Activated naive CD4-positive, alpha-beta T cell treated with anti-CD3 and anti-CD28 coated beads for 36 hours (primary cell): ENCODE measurements at regions of chr3 and their contacts with region 1.

Region 1: DNA sequence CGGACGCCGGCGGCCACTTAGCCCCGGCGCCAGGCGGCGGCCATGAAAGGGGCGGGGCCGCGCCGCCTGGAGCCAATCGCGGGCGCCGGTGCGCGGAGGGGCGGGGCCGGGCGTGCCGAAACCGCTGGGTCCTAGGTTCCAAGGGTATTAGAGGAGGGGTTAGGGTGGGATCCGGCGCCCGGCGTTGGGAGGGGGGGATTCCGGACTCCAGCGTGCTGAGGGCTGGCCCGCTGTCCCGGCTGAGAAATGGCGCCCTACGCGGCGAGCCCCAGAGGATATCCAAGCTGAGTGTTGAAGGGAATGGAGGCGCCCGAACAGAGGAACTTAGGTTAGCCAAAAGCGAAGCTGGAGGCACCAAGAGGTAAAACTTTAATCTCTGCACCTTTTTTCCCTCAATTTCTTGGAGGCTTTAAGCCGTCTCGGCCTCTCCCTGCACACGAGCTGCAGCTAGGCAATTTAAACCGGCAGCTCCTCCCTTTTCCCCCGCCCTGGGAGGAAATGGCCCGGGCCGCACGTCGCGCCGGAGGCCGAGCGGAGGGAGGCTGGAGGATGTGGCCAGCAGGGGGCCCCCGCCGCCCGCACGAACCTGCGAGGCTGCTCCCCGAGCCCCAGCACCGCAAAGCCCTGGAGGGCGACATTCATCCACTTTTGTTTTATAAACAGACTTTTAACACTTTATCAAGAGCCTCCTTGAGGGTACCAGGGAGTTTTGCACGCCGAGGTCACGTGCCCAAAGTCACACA is at the start of gene XXYLT1:
- DNase-seq: peak; percentile 95
- H3K4me3 Mint-ChIP-seq: peak within 1 kb of the TSS; percentile 83
- H3K27ac Mint-ChIP-seq: no peak within 1 kb of the TSS
- H3K4me1 Mint-ChIP-seq: peaks cover 20% of the 10 kb centered on the region
- H3K27me3 Mint-ChIP-seq: no peaks in the 10 kb centered on the region
- total RNA-seq, gene XXYLT1: 1.8 to 2.5 TPM

Region 2: GRCh38 chr3:195197765-195198425 is 73.4 kb before region 1 on chr3:
- CTCF ChIA-PET with region 1: no interaction called
- intact Hi-C with region 1: no loop called
- DNase-seq: no peak
- H3K4me3 Mint-ChIP-seq: no peak overlapping the region
- H3K27ac Mint-ChIP-seq: no peak overlapping the region
- H3K4me1 Mint-ChIP-seq: peaks cover 15% of the 10 kb centered on the region
- H3K27me3 Mint-ChIP-seq: no peaks in the 10 kb centered on the region

Region 3: DNA sequence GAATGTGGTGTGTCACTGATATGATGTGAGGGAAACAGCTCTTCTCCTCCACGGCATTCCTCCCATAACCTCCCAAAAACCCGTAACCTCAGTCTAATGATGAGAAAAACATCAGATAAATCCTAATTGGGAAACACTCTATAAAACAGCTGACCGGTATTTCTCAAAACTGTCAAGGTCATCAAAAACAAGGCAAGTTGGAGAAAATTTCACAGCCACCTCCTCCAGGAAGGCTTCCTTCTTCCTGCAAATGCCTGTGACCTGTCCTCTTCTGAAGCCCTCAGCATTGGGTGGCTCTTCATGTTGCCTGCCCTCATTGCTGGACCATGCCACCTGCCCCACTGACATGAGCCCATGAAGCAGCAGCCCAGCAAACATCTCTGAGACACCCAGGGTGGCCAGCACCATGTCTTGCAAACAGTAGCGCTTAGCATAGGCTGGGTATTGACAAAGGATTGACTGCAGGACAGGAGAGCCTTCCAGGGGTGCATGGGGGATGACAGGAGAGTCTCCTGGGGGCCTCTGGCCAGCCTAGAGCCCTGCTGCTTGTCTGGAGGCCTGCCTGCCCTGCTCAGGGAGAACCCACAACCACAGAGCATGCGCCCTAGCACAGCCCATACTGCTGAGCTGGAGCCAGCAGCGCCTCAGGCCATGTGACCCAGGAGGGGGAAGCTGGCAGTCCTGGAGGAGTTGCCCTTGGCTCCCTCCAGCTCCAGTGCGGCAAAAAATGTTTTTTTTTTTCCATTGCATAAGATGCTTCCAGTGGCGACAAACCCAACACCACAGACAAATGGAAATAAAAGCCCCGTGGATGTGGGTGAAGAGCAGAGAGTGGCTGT is 50.1 kb before region 1 on chr3:
- CTCF ChIA-PET with region 1: no interaction called
- intact Hi-C with region 1: no loop called
- DNase-seq: no peak
- H3K4me3 Mint-ChIP-seq: no peak overlapping the region
- H3K27ac Mint-ChIP-seq: no peak overlapping the region
- H3K4me1 Mint-ChIP-seq: no peaks in the 10 kb centered on the region
- H3K27me3 Mint-ChIP-seq: no peaks in the 10 kb centered on the region

Region 4: DNA sequence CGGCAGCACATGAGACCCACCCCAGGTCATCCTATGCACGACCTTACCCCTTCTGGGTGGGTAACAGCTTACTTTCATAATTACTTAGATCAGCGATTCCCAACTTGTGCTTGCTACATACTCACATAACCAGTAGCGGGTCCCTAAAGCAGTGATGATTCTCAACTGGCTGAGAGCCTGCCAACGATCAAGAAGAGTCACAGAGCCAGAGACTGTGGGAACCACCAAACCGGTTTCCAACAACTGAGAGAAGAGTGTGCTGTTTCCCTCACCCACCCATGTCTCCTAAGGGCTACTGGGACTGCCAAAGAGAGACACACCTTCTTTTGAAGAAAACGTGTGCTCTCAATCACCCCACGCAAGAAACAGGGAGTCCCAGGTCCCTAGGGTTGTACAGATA is 11.7 kb after region 1 on chr3:
- CTCF ChIA-PET with region 1: interaction called, 18 read pairs
- intact Hi-C with region 1: no loop called
- DNase-seq: no peak
- H3K4me3 Mint-ChIP-seq: no peak overlapping the region
- H3K27ac Mint-ChIP-seq: no peak overlapping the region
- H3K4me1 Mint-ChIP-seq: peaks cover 9% of the 10 kb centered on the region
- H3K27me3 Mint-ChIP-seq: no peaks in the 10 kb centered on the region

Region 5: GRCh38 chr3:195319060-195319459 is 47.8 kb after region 1 on chr3:
- CTCF ChIA-PET with region 1: no interaction called
- intact Hi-C with region 1: no loop called
- DNase-seq: peak; percentile 7
- H3K4me3 Mint-ChIP-seq: no peak overlapping the region
- H3K27ac Mint-ChIP-seq: no peak overlapping the region
- H3K4me1 Mint-ChIP-seq: peaks cover 10% of the 10 kb centered on the region
- H3K27me3 Mint-ChIP-seq: no peaks in the 10 kb centered on the region

Region 6: DNA sequence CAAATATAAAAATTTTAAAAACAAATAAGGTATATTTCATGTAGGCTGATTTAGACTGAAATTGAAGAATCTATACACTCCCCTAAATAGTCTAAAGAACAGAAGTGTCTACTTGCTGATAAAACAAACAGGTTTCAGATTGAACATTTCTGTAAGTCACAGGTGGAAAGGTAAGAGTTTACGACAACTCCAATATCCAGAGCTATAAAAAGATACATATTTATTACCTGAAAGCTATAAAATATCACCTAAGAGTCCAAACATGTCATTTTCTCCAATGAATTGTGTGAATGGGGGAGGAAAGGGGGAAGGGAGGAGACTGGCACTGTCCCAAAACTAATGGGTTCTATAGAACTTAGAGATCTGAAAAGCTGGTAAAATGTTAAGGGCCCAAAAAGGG is 245.7 kb after region 1 on chr3:
- CTCF ChIA-PET with region 1: interaction called, 71 read pairs
- intact Hi-C with region 1: loop called (anchors 1 kb)
- DNase-seq: no peak
- H3K4me3 Mint-ChIP-seq: no peak overlapping the region
- H3K27ac Mint-ChIP-seq: no peak overlapping the region
- H3K4me1 Mint-ChIP-seq: peaks cover 40% of the 10 kb centered on the region
- H3K27me3 Mint-ChIP-seq: no peaks in the 10 kb centered on the region

Region 7: DNA sequence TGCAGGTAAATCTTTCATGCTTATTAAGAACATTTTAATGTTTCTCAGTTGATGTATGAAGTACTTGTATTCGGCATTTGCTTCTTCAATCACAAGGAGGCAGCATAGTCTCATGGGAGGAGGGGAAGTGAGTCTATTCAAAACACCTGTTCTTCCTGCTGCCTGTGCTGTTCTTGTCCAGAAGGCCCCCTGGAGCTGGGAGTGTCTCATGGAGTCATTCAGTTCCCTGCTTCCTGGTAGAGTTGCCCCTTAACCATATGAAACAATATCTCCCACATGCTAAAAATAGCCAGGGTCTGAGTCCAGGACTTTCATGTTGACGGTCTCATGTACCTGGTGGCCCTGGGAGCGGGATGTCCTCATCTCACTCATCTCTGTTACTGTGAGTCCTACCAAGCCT is 287.3 kb after region 1 on chr3:
- CTCF ChIA-PET with region 1: interaction called, 13 read pairs
- intact Hi-C with region 1: loop called (anchors 1 kb)
- DNase-seq: peak; percentile 67
- H3K4me3 Mint-ChIP-seq: no peak overlapping the region
- H3K27ac Mint-ChIP-seq: no peak overlapping the region
- H3K4me1 Mint-ChIP-seq: peaks cover 37% of the 10 kb centered on the region
- H3K27me3 Mint-ChIP-seq: no peaks in the 10 kb centered on the region

Region 8: DNA sequence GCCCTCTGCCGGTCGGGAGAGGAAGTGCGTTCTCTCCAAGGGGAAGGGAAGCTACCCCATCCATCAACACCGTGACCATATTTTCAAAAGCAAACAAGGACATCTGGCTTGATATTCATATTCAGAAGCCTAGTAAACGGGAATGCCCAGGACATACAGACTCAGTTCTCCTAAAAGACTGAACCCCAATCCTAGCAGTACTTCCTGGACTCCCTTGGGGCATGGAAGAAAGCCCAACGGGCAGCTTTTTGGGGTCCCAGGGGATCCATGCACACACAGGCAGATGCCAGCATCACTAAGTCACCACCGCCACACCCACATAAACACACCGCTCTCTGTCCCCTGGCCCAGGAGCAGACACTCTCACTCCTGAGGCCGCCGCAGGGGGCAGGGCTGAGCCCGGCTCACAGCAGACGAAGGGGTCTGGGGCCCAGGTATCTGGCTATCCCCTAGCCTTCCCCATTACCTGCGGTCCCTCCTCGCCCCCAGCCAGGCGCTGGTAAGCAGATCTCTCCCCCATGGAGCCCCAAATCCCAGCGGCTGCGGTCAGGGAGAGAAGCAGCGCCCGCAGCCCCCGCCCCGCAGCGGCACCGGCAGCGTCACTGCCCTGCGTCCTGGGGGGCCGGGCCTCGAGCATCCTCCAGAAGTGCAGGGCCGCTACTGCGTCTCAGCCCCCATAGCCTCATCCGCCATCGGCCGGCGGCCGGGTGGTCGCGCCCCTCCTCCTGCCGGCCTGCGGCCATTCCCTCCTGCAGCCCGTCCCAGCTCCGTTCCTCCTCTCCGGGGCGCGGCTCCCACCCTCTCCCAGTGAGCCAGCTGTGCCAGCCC is 623.7 kb after region 1 on chr3:
- CTCF ChIA-PET with region 1: interaction called, 4 read pairs
- intact Hi-C with region 1: loop called (anchors 1 kb)
- DNase-seq: peak; percentile 81
- H3K4me3 Mint-ChIP-seq: peak overlapping the region; percentile 87
- H3K27ac Mint-ChIP-seq: peak overlapping the region; percentile 86
- H3K4me1 Mint-ChIP-seq: peaks cover 44% of the 10 kb centered on the region
- H3K27me3 Mint-ChIP-seq: no peaks in the 10 kb centered on the region